K562 (cell line): ENCODE measurements at regions of chr7 and their contacts with region 1.

Region 1: DNA sequence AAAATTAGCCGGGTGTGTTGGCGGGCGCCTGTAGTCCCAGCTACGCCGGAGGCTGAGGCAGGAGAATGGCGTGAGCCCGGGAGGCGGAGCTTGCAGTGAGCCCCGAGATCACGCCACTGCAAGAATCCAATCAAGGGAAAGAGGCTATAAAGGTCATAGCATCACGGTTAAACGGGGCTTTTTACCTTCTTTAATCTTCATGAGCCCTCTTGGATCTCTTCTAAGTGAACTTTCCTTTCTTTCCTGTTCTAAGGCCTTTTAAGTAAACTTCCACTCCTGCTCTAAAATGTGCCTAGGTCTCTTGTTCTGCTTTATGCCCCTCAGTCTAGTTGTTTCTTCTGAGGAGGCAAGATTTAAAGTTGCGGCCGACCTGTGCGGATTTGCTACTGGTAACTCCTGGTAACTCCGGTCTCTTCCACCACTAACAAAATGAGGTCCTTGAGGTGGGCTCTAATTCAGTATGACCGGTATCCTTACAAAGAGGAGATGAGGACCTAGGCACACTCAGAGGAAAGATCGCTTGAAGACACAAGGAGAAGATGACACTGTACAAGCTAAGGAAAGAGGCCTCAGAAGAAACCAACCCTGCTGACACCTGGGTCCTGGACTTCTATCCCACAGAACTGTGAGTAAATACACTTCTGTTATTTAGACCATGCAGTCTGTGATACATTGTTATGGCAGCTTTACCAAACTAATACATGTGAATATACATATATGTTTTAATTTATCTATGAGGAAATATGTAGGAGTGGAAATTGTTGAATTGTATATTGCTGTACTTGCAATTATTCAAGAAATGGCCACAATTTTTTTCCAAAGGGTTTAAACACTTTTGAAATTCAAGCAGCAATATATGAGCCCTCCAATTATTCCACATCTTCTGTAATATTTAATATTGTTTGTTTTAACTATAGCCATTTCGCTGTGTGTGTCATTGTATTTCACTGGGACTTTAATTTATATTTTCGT is 331.5 kb upstream of the CNTNAP2 start:
- DNase-seq: peak in 3 of 4 experiments; percentile 15 to 89 (median 43)
- ATAC-seq: peak; percentile 77
- H3K4me3 ChIP-seq: peak overlapping the region; percentile 52
- H3K27ac ChIP-seq: peak overlapping the region; percentile 86
- H3K4me1 ChIP-seq: peaks cover 0 to 4% of the 10 kb centered on the region in 2 experiments; a peak in 2 of 5 replicates
- H3K27me3 ChIP-seq: no peaks in the 10 kb centered on the region
- CTCF ChIP-seq: no peak
- EP300 ChIP-seq: no peak; the same call in none of the 2 replicates
- POLR2A ChIP-seq: peak; percentile 70
- RAD21 ChIP-seq: no peak

Region 2: DNA sequence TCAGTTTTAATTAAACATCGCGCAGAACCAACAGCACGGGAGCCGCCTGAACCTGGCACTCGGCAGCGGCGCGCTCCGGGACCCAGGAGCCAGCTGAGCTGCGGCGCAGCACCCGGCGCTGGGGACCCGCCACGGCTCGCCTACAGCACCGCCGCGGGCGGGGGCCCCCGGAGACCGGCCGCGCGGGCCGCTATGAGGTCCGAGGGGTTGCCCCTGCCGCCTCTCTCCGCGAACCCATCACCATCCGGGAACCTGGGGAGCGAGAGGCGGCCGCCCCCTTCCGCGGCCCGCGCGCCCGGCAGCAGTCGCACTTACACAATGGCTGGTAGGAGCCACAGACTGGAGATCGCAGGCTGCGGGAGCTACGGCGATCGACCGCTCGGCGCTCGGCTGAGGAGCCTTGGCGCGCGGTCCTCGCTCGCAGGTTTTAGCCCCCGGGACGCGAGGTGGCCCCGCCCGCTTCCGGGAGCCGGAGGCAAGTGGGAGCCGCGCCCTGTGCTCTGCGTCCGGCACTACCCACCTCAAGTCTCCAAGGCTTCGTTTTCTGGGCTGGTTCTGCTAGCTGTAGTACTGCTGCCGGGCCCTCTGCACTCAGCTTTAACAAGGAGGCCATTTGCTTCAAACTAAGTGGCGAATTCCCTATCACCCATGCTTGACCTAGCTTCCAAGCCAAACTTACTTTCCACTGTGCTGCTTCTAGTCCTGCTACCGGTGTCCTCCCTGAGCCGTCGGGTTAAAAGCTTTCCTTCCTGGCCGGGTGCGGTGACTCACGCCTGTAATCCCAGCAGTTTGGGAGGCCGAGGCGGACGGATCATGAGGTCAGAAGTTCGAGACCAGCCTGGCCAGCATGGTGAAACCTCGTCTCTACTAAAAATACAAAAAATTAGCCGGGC is 949.2 kb before region 1 on chr7 and contains the start of gene TPK1:
- CTCF ChIA-PET with region 1: no interaction called
- POLR2A ChIA-PET with region 1: no interaction called
- in situ Hi-C with region 1: no loop called
- intact Hi-C with region 1: loop called (anchors 10 kb)
- DNase-seq: peak; percentile 95 to 98 (median 96)
- ATAC-seq: peak; percentile 95
- H3K4me3 ChIP-seq: peak within 1 kb of the TSS; percentile 86
- H3K27ac ChIP-seq: peak within 1 kb of the TSS; percentile 90
- H3K4me1 ChIP-seq: peaks cover 9 to 11% of the 10 kb centered on the region in 2 experiments; a peak in 4 of 5 replicates
- H3K27me3 ChIP-seq: no peaks in the 10 kb centered on the region
- CTCF ChIP-seq: 0 out of 6 replicates have a peak, but pooled peaks of 1 of the 3 experiments have one; percentile 2
- EP300 ChIP-seq: peak; percentile 66
- POLR2A ChIP-seq: peak; percentile 92
- RAD21 ChIP-seq: peak in 1 of 2 experiments; percentile 23; a peak in 2 of 4 replicates
- polyA plus RNA-seq, gene TPK1: 12.9 to 16.2 TPM

Region 3: GRCh38 chr7:145797507-145797906 is 12.4 kb after region 1 on chr7:
- CTCF ChIA-PET with region 1: no interaction called
- POLR2A ChIA-PET with region 1: interaction called, 11 read pairs
- in situ Hi-C with region 1: no loop called
- intact Hi-C with region 1: loop called (anchors 2 kb)
- DNase-seq: no peak
- ATAC-seq: no peak
- H3K4me3 ChIP-seq: no peak overlapping the region
- H3K27ac ChIP-seq: no peak overlapping the region
- H3K4me1 ChIP-seq: no peaks in the 10 kb centered on the region; a peak in 1 of 5 replicates
- H3K27me3 ChIP-seq: no peaks in the 10 kb centered on the region
- CTCF ChIP-seq: no peak
- EP300 ChIP-seq: no peak
- POLR2A ChIP-seq: no peak
- RAD21 ChIP-seq: no peak

Region 4: DNA sequence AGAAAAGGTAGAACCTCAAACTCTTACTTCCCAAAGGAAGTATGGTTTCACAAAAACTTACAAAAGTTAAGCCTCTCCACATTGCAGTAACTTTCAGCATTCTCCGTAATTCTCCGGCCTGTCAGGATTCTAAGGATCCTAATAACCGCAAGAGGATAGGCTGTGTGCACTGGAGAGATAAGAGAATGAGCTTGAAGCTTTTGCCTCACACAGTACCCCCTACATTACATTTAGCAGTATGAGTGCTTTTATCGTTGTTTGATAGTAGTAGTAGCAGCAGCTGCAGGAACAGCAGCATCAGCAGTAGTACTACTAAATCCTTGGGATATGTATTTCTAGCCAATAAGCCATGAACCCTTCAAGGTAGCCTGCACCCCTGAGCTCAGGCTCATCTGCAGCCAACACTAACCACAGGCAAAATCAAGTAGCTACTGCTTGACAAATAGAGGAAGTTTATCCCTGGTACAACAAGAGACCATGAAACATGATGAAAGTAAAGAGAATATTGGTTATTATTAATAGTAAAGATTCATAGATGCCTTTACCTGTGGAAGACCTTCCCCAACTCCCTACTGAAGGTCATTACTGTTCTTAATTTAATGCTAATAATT is 108.9 kb after region 1 on chr7:
- CTCF ChIA-PET with region 1: no interaction called
- POLR2A ChIA-PET with region 1: no interaction called
- in situ Hi-C with region 1: no loop called
- intact Hi-C with region 1: loop called (anchors 2 kb)
- DNase-seq: peak in 3 of 4 experiments; percentile 21 to 87 (median 75)
- ATAC-seq: peak; percentile 99
- H3K4me3 ChIP-seq: no peak overlapping the region
- H3K27ac ChIP-seq: no peak overlapping the region
- H3K4me1 ChIP-seq: peaks cover 0 to 10% of the 10 kb centered on the region in 2 experiments; a peak in 2 of 5 replicates
- H3K27me3 ChIP-seq: no peaks in the 10 kb centered on the region
- CTCF ChIP-seq: no peak
- EP300 ChIP-seq: peak; percentile 83
- POLR2A ChIP-seq: no peak
- RAD21 ChIP-seq: no peak

Region 5: GRCh38 chr7:146054909-146055308 is 269.8 kb after region 1 on chr7:
- CTCF ChIA-PET with region 1: no interaction called
- POLR2A ChIA-PET with region 1: no interaction called
- in situ Hi-C with region 1: no loop called
- intact Hi-C with region 1: loop called (anchors 10 kb)
- DNase-seq: no peak
- ATAC-seq: no peak
- H3K4me3 ChIP-seq: no peak overlapping the region
- H3K27ac ChIP-seq: no peak overlapping the region
- H3K4me1 ChIP-seq: peaks cover 0 to 17% of the 10 kb centered on the region in 2 experiments; a peak in 2 of 5 replicates
- H3K27me3 ChIP-seq: no peaks in the 10 kb centered on the region
- CTCF ChIP-seq: no peak
- EP300 ChIP-seq: no peak
- POLR2A ChIP-seq: no peak
- RAD21 ChIP-seq: no peak